ENCODE measurements at regions of chr20 and their contacts with region 1.

Region 1: GRCh38 chr20:1952737-1953530 is 40.9 kb downstream of the PDYN start:
- DNase-seq: no peak
- ATAC-seq: peak; percentile 15
- H3K4me3 Mint-ChIP-seq: peak overlapping the region; percentile 55
- H3K27ac Mint-ChIP-seq: peak overlapping the region; percentile 99
- H3K4me1 Mint-ChIP-seq: peaks cover 45% of the 10 kb centered on the region
- H3K27me3 Mint-ChIP-seq: no peaks in the 10 kb centered on the region
- CTCF ChIP-seq: no peak

Region 2: GRCh38 chr20:1392823-1393506 is 560.0 kb before region 1 on chr20 and contains the start of gene FKBP1A:
- CTCF ChIA-PET with region 1: no interaction called
- POLR2A ChIA-PET with region 1: no interaction called
- intact Hi-C with region 1: loop called (anchors 10 kb)
- DNase-seq: peak; percentile 90
- ATAC-seq: peak; percentile 85
- H3K4me3 Mint-ChIP-seq: peak within 1 kb of the TSS; percentile 98
- H3K27ac Mint-ChIP-seq: peak within 1 kb of the TSS; percentile 99
- H3K4me1 Mint-ChIP-seq: peaks cover 83% of the 10 kb centered on the region
- H3K27me3 Mint-ChIP-seq: no peaks in the 10 kb centered on the region
- CTCF ChIP-seq: no peak
- total RNA-seq, gene FKBP1A: 128 and 134 TPM in 2 replicates

Region 3: DNA sequence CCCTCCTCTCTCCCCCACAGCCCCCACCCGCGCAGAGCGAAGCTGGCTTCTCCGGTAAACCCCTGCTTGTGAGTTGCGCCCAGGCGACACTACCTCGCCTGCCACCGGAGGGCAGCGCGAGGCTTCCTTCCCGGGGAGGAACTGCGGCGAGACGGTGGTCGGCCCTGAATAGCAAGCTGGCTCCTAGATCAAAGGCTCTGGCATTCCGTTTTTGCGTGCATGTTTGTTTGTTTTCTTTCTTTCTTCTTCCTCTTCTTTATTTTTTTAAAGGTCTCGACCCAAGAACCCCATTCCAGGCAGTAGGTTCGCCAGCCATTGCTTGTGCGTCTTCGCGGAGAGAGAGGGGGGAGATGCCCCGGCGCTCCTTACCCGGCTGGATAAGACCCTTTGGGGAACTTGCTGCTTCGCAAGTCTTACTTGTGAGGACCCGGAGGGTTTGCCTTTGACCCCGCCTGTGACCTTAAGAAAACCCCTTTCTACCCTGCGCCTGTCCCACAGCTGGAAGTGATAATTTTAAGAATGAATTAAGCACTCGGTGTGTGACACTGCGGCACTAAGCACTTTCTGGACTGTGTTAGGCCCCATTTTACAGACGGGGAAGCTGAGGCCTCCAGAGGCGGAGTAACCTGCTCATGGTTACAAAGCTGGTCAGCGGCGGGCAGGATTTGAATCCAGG is 150.4 kb before region 1 on chr20:
- CTCF ChIA-PET with region 1: interaction called, 26 read pairs
- POLR2A ChIA-PET with region 1: interaction called, 15 read pairs
- intact Hi-C with region 1: loop called (anchors 1 kb)
- DNase-seq: peak; percentile 65
- ATAC-seq: peak; percentile 71
- H3K4me3 Mint-ChIP-seq: peak overlapping the region; percentile 85
- H3K27ac Mint-ChIP-seq: peak overlapping the region; percentile 76
- H3K4me1 Mint-ChIP-seq: peaks cover 25% of the 10 kb centered on the region
- H3K27me3 Mint-ChIP-seq: no peaks in the 10 kb centered on the region
- CTCF ChIP-seq: peak; percentile 60

Region 4: DNA sequence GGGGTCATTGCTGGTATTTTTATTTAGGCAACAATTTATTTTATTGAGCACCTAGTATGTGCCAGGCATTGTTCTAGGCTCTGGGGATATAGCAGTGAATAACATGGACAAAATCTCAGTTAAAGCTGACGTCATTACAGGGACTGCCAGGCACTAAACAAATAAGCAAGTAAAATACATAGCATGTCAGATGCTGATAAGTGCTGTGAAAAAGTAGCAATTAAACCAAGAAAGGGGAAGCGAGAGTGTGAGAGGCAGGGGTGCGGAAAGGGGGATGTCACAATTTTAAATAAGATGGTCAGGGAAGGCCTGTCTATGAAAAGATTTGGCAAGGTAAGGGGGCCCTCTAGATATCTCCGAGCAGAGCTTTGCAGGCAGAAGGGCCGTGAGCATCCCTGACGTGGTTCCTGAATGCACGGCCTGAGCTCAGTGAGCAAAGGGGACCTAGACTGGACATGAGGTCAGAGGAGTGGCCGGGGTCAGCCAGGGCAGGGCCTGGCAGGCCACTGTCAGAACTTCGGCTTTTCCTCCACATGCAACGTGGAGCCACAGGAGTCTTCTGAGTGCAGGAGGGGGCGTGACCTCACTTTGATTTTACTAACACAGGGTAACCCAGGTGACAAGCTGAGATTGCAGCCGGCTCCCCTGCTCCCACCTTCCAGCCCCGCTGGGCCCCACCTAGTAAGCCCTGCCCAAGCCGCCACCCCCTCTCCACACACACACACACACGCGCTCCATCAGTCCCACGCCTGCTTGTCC is 82.0 kb before region 1 on chr20:
- CTCF ChIA-PET with region 1: no interaction called
- POLR2A ChIA-PET with region 1: interaction called, 19 read pairs
- intact Hi-C with region 1: loop called (anchors 1 kb)
- DNase-seq: peak; percentile 58
- ATAC-seq: peak; percentile 76
- H3K4me3 Mint-ChIP-seq: peak overlapping the region; percentile 59
- H3K27ac Mint-ChIP-seq: peak overlapping the region; percentile 79
- H3K4me1 Mint-ChIP-seq: peaks cover 62% of the 10 kb centered on the region
- H3K27me3 Mint-ChIP-seq: peaks cover 11% of the 10 kb centered on the region
- CTCF ChIP-seq: no peak

Region 5: GRCh38 chr20:1965520-1966351 is 12.8 kb after region 1 on chr20:
- CTCF ChIA-PET with region 1: interaction called, 6 read pairs
- POLR2A ChIA-PET with region 1: interaction called, 9 read pairs
- intact Hi-C with region 1: loop called (anchors 1 kb)
- DNase-seq: peak; percentile 81
- ATAC-seq: peak; percentile 91
- H3K4me3 Mint-ChIP-seq: peak overlapping the region; percentile 77
- H3K27ac Mint-ChIP-seq: peak overlapping the region; percentile 78
- H3K4me1 Mint-ChIP-seq: peaks cover 17% of the 10 kb centered on the region
- H3K27me3 Mint-ChIP-seq: peaks cover 1% of the 10 kb centered on the region
- CTCF ChIP-seq: peak; percentile 68

Region 6: DNA sequence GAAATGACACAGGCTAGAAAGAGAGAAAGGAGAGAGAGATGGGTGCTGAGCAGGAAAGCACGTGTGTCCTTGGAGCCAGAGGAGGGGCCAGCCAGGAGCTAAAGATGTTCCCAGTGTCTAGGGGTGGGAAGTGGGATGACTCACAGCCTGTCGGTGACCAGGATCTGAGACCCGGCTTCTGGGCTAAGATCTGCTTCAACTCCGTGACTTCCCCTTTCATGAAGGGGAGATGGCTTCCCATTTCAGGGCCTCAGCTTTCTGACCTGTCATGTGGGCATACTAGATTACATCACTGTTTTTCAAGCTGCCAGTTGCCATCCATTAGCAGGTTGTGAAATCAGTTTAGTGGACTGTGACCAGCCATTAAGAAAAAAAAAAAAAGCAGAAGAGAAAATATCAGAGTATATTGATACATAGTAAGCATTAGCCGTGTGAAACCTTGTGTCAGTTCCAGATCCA is 348.3 kb after region 1 on chr20:
- CTCF ChIA-PET with region 1: interaction called, 3 read pairs
- POLR2A ChIA-PET with region 1: no interaction called
- intact Hi-C with region 1: loop called (anchors 5 kb)
- DNase-seq: peak; percentile 52
- ATAC-seq: peak; percentile 94
- H3K4me3 Mint-ChIP-seq: peak overlapping the region; percentile 8
- H3K27ac Mint-ChIP-seq: peak overlapping the region; percentile 87
- H3K4me1 Mint-ChIP-seq: peaks cover 33% of the 10 kb centered on the region
- H3K27me3 Mint-ChIP-seq: no peaks in the 10 kb centered on the region
- CTCF ChIP-seq: no peak